ENCODE measurements at regions of chr7 and their contacts with region 1.

Region 1: GRCh38 chr7:27185013-27185855 is at the start of gene HOXA11:
- DNase-seq: no peak
- H3K4me3 ChIP-seq: peak within 1 kb of the TSS; percentile 70
- CTCF ChIP-seq: no peak

Region 2: GRCh38 chr7:27172823-27173510 is 12.3 kb before region 1 on chr7:
- CTCF ChIA-PET with region 1: interaction called, 48 read pairs
- POLR2A ChIA-PET with region 1: interaction called, 53 read pairs
- DNase-seq: no peak
- H3K4me3 ChIP-seq: peak overlapping the region; percentile 75
- CTCF ChIP-seq: no peak

Region 3: GRCh38 chr7:27224983-27225934 is 40.0 kb after region 1 on chr7:
- CTCF ChIA-PET with region 1: no interaction called
- POLR2A ChIA-PET with region 1: no interaction called
- DNase-seq: no peak
- H3K4me3 ChIP-seq: no peak overlapping the region
- CTCF ChIP-seq: no peak

Region 4: GRCh38 chr7:27248911-27249723 is 63.9 kb after region 1 on chr7:
- CTCF ChIA-PET with region 1: no interaction called
- POLR2A ChIA-PET with region 1: no interaction called
- DNase-seq: no peak
- H3K4me3 ChIP-seq: no peak overlapping the region
- CTCF ChIP-seq: no peak